ENCODE measurements at regions of chr21 and their contacts with region 1.

Region 1: GRCh38 chr21:32257962-32258785 is 20.7 kb downstream of the MIS18A start:
- DNase-seq: peak; percentile 59
- H3K4me3 Mint-ChIP-seq: peak overlapping the region; percentile 18
- H3K27ac Mint-ChIP-seq: peak overlapping the region; percentile 19
- H3K4me1 Mint-ChIP-seq: peaks cover 13% of the 10 kb centered on the region
- H3K27me3 Mint-ChIP-seq: peaks cover 10% of the 10 kb centered on the region
- CTCF ChIP-seq: peak; percentile 21

Region 2: GRCh38 chr21:31781737-31782136 is 476.4 kb before region 1 on chr21:
- CTCF ChIA-PET with region 1: interaction called, 6 read pairs
- intact Hi-C with region 1: loop called (anchors 1 kb)
- DNase-seq: no peak
- H3K4me3 Mint-ChIP-seq: no peak overlapping the region
- H3K27ac Mint-ChIP-seq: no peak overlapping the region
- H3K4me1 Mint-ChIP-seq: peaks cover 11% of the 10 kb centered on the region
- H3K27me3 Mint-ChIP-seq: peaks cover 30% of the 10 kb centered on the region
- CTCF ChIP-seq: no peak

Region 3: GRCh38 chr21:31798842-31799704 is 459.1 kb before region 1 on chr21:
- CTCF ChIA-PET with region 1: no interaction called
- intact Hi-C with region 1: no loop called
- DNase-seq: no peak
- H3K4me3 Mint-ChIP-seq: no peak overlapping the region
- H3K27ac Mint-ChIP-seq: no peak overlapping the region
- H3K4me1 Mint-ChIP-seq: no peaks in the 10 kb centered on the region
- H3K27me3 Mint-ChIP-seq: peaks cover 48% of the 10 kb centered on the region
- CTCF ChIP-seq: no peak

Region 4: GRCh38 chr21:31866077-31866511 is 392.1 kb before region 1 on chr21:
- CTCF ChIA-PET with region 1: interaction called, 14 read pairs
- intact Hi-C with region 1: loop called (anchors 2 kb)
- DNase-seq: peak; percentile 89
- H3K4me3 Mint-ChIP-seq: no peak overlapping the region
- H3K27ac Mint-ChIP-seq: no peak overlapping the region
- H3K4me1 Mint-ChIP-seq: no peaks in the 10 kb centered on the region
- H3K27me3 Mint-ChIP-seq: peaks cover 9% of the 10 kb centered on the region
- CTCF ChIP-seq: peak; percentile 77

Region 5: DNA sequence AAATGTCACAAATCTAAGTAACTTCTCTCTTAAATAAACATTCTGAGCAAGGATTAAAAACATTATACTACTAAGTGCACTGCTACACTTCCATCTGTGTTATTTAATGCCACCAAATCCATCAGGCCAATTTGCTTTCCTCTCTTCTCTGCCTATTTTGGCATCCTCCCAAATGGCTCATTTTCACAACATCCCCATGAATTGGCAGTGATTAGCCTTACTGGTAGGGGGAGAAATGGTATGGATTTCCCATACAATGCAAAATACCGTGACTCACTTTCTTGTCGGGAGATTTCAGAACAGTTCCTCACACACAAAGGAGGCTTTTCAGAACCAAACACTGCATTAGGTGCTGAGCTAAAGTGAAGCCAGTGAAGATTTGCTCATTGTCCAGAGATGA is 175.0 kb before region 1 on chr21:
- CTCF ChIA-PET with region 1: no interaction called
- intact Hi-C with region 1: loop called (anchors 10 kb)
- DNase-seq: no peak
- H3K4me3 Mint-ChIP-seq: no peak overlapping the region
- H3K27ac Mint-ChIP-seq: no peak overlapping the region
- H3K4me1 Mint-ChIP-seq: no peaks in the 10 kb centered on the region
- H3K27me3 Mint-ChIP-seq: peaks cover 70% of the 10 kb centered on the region
- CTCF ChIP-seq: no peak

Region 6: GRCh38 chr21:32364387-32364786 is 106.2 kb after region 1 on chr21:
- CTCF ChIA-PET with region 1: no interaction called
- intact Hi-C with region 1: no loop called
- DNase-seq: no peak
- H3K4me3 Mint-ChIP-seq: no peak overlapping the region
- H3K27ac Mint-ChIP-seq: no peak overlapping the region
- H3K4me1 Mint-ChIP-seq: no peaks in the 10 kb centered on the region
- H3K27me3 Mint-ChIP-seq: no peaks in the 10 kb centered on the region
- CTCF ChIP-seq: no peak